Heart left ventricle (tissue), 16 donors: ENCODE measurements at regions of chr12 and their contacts with region 1.

Region 1: GRCh38 chr12:9464408-9464807 is 143.3 kb downstream of the KLRB1 start:
- DNase-seq: no peak
- ATAC-seq: no peak
- H3K4me3 ChIP-seq: no peak overlapping the region
- H3K27ac ChIP-seq: no peak overlapping the region
- H3K4me1 ChIP-seq: no peaks in the 10 kb centered on the region
- H3K27me3 ChIP-seq: no peaks in the 10 kb centered on the region
- CTCF ChIP-seq: no peak
- POLR2A ChIP-seq: no peak

Region 2: DNA sequence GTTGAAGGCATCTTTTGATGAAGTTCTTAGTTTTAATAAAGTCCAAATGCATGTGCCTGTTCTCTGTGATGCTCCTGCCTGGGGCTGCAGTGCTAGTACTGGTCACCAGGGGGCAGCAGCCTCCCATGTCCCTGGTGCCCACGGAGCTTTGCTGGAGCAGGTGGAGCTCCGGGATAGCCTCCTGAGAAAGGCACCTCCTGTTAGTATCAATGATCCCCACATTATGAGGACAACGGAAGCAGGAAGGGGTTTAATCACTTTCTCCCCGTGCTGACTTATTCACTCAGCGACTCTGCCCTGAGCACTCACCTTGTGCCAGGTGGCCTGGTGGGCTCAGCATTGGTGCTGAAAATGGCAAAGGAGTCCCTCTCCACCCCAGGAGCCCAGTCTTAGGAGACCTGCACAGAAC is 133.2 kb before region 1 on chr12:
- intact Hi-C with region 1: loop called in 4 of 10 experiments (anchors 1 to 10 kb)
- DNase-seq: peak; percentile 34 to 84 (median 60)
- ATAC-seq: peak in 3 of 4 donors; percentile 62 to 86 (median 74)
- H3K4me3 ChIP-seq: no peak overlapping the region
- H3K27ac ChIP-seq: no peak overlapping the region
- H3K4me1 ChIP-seq: peaks cover 0 to 2% (median 0%) of the 10 kb centered on the region in 12 donors
- H3K27me3 ChIP-seq: no peaks in the 10 kb centered on the region
- CTCF ChIP-seq: peak; percentile 88 to 98 (median 95)
- POLR2A ChIP-seq: no peak

Region 3: DNA sequence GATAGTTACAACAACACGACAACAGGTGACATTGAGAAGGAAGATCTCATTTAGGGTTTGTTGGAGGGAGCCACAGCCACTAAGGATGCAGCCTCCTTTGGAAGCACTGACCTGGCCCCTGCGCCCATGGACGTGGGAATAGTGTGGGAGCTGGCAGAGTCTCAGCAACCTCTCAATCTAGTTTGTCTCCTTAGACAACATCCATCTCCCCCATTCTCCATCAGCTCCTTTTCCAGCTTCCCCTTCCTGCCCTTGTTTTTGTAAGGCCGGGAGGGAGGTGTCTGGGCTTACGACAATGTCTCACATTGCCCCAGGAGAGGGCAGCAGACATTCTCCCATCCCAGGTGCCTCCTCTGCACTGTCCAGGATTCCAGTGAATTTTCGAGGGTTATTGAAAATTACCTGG is 86.0 kb before region 1 on chr12:
- intact Hi-C with region 1: loop called in 1 of 10 experiments (anchors 2 kb)
- DNase-seq: no peak
- ATAC-seq: peak in 1 of 4 donors; percentile 49
- H3K4me3 ChIP-seq: no peak overlapping the region
- H3K27ac ChIP-seq: no peak overlapping the region
- H3K4me1 ChIP-seq: no peaks in the 10 kb centered on the region
- H3K27me3 ChIP-seq: peaks cover 0 to 3% (median 0%) of the 10 kb centered on the region in 9 donors
- CTCF ChIP-seq: peak in 8 of 12 donors; percentile 7 to 41 (median 34)
- POLR2A ChIP-seq: no peak